ENCODE measurements at regions of chrX and their contacts with region 1.

Region 1: GRCh38 chrX:149962859-149963757 is 24.8 kb upstream of the EOLA2 start:
- DNase-seq: peak in 9 of 10 donors; percentile 20 to 94 (median 48)

Region 2: DNA sequence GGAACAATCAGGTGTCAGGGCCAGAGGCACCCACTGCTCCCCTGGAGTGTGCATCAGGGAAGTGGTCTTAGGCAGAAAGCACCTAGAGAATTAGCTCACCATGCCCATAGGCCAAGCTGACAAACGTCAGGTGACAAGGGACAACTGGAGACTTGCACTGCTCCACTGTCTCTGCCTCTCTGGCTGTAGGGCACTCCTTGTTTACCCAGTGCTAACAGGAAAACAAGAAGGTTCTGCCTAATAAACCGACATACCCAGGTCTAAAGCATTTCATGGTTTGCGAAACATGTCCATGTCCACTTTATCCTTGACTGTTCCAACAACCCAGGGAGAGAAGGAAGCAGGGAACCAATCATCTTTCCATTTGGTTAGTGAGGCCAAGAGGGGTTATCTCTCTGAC is 307.5 kb after region 1 on chrX:
- intact Hi-C with region 1: no loop called
- DNase-seq: no peak

Region 3: GRCh38 chrX:150508451-150509367 is 545.6 kb after region 1 on chrX:
- intact Hi-C with region 1: loop called (anchors 10 kb)
- DNase-seq: peak; percentile 27 to 92 (median 65)

Region 4: GRCh38 chrX:150715184-150715583 is 752.1 kb after region 1 on chrX:
- intact Hi-C with region 1: loop called (anchors 5 kb)
- DNase-seq: no peak